Mucosa of descending colon (tissue), 3 donors: ENCODE measurements at regions of chr3 and their contacts with region 1.

Region 1: GRCh38 chr3:58532794-58533220 is 4.2 kb downstream of the ACOX2 start:
- DNase-seq: peak; percentile 79 to 86 (median 85)
- ATAC-seq: peak; percentile 54
- H3K4me3 ChIP-seq: no peak overlapping the region
- H3K4me1 ChIP-seq: peaks cover 39% of the 10 kb centered on the region
- CTCF ChIP-seq: peak; percentile 82

Region 2: GRCh38 chr3:58433400-58434169 is 99.2 kb before region 1 on chr3 and contains the start of gene PDHB:
- intact Hi-C with region 1: loop called in 1 of 2 experiments (anchors 10 kb)
- DNase-seq: peak; percentile 90 to 94 (median 93)
- ATAC-seq: peak; percentile 98
- H3K4me3 ChIP-seq: peak within 1 kb of the TSS; percentile 37
- H3K4me1 ChIP-seq: peaks cover 23% of the 10 kb centered on the region
- CTCF ChIP-seq: no peak
- total RNA-seq, gene PDHB: 65.0 to 69.6 (median 66.6) TPM